ENCODE measurements at regions of chr4 and their contacts with region 1.

Region 1: DNA sequence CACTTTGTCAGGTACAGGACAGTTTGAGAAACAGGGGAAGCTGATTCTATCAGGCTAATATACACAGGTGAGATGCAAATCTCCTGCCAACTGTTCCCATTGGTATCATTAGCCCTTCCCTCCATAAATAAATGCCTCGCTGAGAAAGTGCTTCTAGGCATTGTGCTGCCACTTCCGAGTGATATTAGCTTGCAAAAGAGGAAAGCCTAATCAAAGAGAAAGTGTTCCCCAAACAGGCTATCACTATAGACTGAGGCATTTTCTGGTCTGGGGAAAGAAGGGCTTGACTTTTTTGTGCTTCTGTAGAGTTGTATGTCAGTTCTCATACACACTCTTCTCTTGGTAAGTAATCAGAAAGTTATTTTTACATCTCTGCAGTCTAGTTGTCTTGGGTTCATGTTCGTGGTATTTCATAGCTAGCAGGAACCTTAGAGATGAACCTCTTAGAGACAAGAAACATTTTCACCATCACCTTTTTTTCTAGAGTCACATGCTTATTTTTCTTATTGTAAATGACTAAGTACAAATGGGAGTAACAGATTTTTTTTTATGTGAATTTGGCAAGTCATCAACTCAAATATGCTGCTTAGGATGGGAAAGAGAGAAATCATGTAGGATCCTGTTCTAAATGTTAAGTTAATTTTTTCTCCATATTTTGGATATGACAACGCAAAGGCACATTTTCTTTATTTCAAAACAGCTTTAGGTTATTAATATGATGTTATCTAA is 1009.8 kb downstream of the ADGRL3 start:
- DNase-seq: no peak
- H3K4me3 ChIP-seq: no peak overlapping the region
- H3K27ac ChIP-seq: no peak overlapping the region
- H3K27me3 ChIP-seq: no peaks in the 10 kb centered on the region
- CTCF ChIP-seq: no peak

Region 2: GRCh38 chr4:62115216-62115615 is 94.7 kb before region 1 on chr4:
- CTCF ChIA-PET with region 1: no interaction called
- POLR2A ChIA-PET with region 1: no interaction called
- DNase-seq: no peak
- H3K4me3 ChIP-seq: no peak overlapping the region
- H3K27ac ChIP-seq: no peak overlapping the region
- H3K27me3 ChIP-seq: no peaks in the 10 kb centered on the region
- CTCF ChIP-seq: no peak

Region 3: GRCh38 chr4:62126064-62126732 is 83.7 kb before region 1 on chr4:
- CTCF ChIA-PET with region 1: no interaction called
- POLR2A ChIA-PET with region 1: no interaction called
- DNase-seq: no peak
- H3K4me3 ChIP-seq: no peak overlapping the region
- H3K27ac ChIP-seq: no peak overlapping the region
- H3K27me3 ChIP-seq: no peaks in the 10 kb centered on the region
- CTCF ChIP-seq: no peak

Region 4: DNA sequence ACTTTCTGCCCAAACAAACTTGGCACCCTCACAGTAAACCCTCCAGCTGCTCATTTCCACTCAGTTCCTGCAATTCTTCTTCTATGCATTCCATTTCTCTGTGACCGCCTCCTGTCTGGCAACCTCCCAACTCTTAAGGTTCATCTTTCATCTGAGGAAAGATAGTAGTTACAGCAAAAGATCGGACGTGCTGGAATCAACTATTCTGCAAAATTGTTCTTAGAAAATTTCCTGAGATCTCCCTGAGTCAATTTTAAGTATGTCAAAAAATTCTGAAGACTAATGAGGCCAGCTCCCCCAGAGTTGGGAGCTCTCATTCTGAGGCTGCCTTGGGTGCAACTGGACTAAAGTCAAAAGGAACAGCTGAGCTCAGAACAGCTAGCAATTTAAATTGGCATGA is 16.2 kb after region 1 on chr4:
- CTCF ChIA-PET with region 1: no interaction called
- POLR2A ChIA-PET with region 1: no interaction called
- DNase-seq: no peak
- H3K4me3 ChIP-seq: no peak overlapping the region
- H3K27ac ChIP-seq: no peak overlapping the region
- H3K27me3 ChIP-seq: no peaks in the 10 kb centered on the region
- CTCF ChIP-seq: no peak

Region 5: DNA sequence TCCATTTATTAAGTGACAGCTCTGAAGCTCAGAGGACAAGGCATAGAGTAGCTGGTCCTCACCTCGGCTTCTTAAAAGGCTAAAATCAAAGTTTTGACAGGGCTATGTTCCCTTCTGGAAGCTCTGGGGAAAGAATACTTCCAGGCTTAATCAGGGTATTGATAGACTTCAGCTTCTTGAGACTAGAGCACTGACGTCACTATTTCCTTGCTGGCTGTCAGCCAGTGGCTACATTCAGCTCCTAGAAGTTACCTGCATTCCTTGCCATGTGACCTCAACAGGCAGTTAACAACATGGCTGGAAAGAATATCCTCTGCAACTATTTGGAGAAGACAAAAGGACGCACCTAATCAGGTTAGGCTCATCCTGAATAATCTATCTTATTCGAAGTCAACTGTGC is 135.0 kb after region 1 on chr4:
- CTCF ChIA-PET with region 1: interaction called, 10 read pairs
- POLR2A ChIA-PET with region 1: no interaction called
- DNase-seq: no peak
- H3K4me3 ChIP-seq: no peak overlapping the region
- H3K27ac ChIP-seq: no peak overlapping the region
- H3K27me3 ChIP-seq: no peaks in the 10 kb centered on the region
- CTCF ChIP-seq: no peak

Measured in AG04450 (cell line).